Activated B cell treated with CpG ODN at 0.5 μM for 24 hours (primary cell): ENCODE measurements at regions of chr12 and their contacts with region 1.

Region 1: GRCh38 chr12:132153501-132154340 is 9.5 kb downstream of the NOC4L start:
- DNase-seq: peak; percentile 70
- ATAC-seq: peak; percentile 98
- H3K4me3 Mint-ChIP-seq: no peak overlapping the region
- H3K27ac Mint-ChIP-seq: no peak overlapping the region
- H3K4me1 Mint-ChIP-seq: peaks cover 2% of the 10 kb centered on the region
- H3K27me3 Mint-ChIP-seq: no peaks in the 10 kb centered on the region
- CTCF ChIP-seq: peak; percentile 59

Region 2: DNA sequence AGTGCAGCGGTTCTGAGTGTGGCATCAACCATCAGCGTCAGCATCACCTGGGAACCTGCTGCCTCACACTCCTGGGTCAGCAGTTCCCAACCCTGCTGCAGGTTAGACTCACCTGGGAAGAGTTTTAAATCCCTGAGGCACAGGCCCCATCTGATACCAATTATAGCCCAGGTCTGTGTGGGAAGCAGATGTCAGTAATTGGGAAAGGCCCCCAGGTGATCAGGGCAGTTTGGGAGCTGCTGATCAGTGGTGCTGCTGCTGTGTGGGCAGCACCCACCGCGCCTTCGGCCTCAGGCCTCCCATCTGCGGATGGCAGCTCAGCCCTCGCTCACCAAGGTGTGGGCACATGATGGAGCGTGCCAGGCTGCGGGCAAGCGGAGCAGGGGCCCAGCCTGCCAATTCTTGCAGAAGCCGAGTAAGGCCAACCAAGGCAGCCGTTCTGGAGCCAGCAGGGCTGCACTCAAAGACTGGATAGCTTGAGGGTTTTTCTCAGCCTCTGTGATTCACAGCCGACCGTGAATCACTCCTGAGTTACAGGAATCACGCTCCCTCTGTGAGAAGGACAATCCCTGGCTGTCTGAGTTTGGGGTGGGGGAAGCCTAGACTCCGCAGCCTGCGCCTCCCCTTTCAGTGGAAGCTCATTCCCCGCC is 598.4 kb before region 1 on chr12:
- CTCF ChIA-PET with region 1: no interaction called
- POLR2A ChIA-PET with region 1: no interaction called
- intact Hi-C with region 1: no loop called
- DNase-seq: no peak
- ATAC-seq: no peak
- H3K4me3 Mint-ChIP-seq: no peak overlapping the region
- H3K27ac Mint-ChIP-seq: no peak overlapping the region
- H3K4me1 Mint-ChIP-seq: no peaks in the 10 kb centered on the region
- H3K27me3 Mint-ChIP-seq: peaks cover 5% of the 10 kb centered on the region
- CTCF ChIP-seq: no peak

Region 3: GRCh38 chr12:132218915-132219314 is 65.2 kb after region 1 on chr12:
- CTCF ChIA-PET with region 1: interaction called, 13 read pairs
- POLR2A ChIA-PET with region 1: no interaction called
- intact Hi-C with region 1: no loop called
- DNase-seq: no peak
- ATAC-seq: no peak
- H3K4me3 Mint-ChIP-seq: no peak overlapping the region
- H3K27ac Mint-ChIP-seq: no peak overlapping the region
- H3K4me1 Mint-ChIP-seq: peaks cover 15% of the 10 kb centered on the region
- H3K27me3 Mint-ChIP-seq: peaks cover 8% of the 10 kb centered on the region
- CTCF ChIP-seq: no peak

Region 4: GRCh38 chr12:132560614-132561426 is 407.1 kb after region 1 on chr12:
- CTCF ChIA-PET with region 1: interaction called, 9 read pairs
- POLR2A ChIA-PET with region 1: interaction called, 4 read pairs
- intact Hi-C with region 1: loop called (anchors 1 kb)
- DNase-seq: peak; percentile 75
- ATAC-seq: peak; percentile 69
- H3K4me3 Mint-ChIP-seq: peak overlapping the region; percentile 77
- H3K27ac Mint-ChIP-seq: no peak overlapping the region
- H3K4me1 Mint-ChIP-seq: peaks cover 21% of the 10 kb centered on the region
- H3K27me3 Mint-ChIP-seq: no peaks in the 10 kb centered on the region
- CTCF ChIP-seq: peak; percentile 35